Activated T-helper 1 cell treated with anti-CD3 and anti-CD28 coated beads, Interleukin-12 subunit alpha, Interleukin-12 subunit beta, Interleukin-2, Interleukin-4 antibody, amounts not matched to agents 30 ng/mL and 10 ng/mL and 1 ng/mL, durations not matched to agents 14 hours and 24 hours and 36 hours (primary cell): ENCODE measurements at regions of chr11 and their contacts with region 1.

Region 1: DNA sequence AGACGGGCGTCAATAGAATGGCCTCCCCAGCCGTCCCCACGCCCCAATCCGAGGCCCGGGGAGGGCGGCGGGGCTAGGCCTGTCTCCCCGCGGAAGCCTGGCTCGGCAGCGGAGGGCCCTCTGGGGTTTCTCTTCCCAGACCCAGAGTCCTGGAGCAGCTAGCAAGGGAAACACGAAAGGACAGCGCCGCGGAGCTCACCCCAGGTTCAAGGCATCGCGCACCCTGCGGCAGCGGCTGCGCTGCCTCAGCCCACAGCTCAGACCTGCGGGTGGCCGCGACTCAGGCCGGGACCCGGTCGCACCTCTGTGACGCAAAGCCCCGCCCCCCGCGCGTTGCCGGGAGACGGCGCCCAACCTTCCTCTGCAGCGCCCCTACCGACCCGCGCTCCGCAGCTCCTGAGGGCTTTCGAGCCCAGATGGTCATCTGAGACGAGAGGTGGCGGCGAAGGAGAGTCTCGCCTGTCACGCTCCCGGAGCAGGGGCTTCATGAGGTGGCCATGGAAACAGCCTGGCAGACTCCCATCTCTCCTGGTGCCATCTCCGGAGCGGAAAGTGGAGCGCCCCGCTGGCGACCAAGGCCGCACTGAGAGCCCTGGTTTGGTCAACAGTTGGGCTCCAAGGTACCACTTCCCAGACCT is at the start of gene RNF141:
- DNase-seq: peak; percentile 92
- H3K4me3 Mint-ChIP-seq: peak within 1 kb of the TSS; percentile 90
- H3K27ac Mint-ChIP-seq: peak within 1 kb of the TSS; percentile 73
- H3K4me1 Mint-ChIP-seq: peaks cover 29% of the 10 kb centered on the region
- H3K27me3 Mint-ChIP-seq: peaks cover 5% of the 10 kb centered on the region
- total RNA-seq, gene RNF141: 12.4 and 13.2 TPM in 2 replicates

Region 2: DNA sequence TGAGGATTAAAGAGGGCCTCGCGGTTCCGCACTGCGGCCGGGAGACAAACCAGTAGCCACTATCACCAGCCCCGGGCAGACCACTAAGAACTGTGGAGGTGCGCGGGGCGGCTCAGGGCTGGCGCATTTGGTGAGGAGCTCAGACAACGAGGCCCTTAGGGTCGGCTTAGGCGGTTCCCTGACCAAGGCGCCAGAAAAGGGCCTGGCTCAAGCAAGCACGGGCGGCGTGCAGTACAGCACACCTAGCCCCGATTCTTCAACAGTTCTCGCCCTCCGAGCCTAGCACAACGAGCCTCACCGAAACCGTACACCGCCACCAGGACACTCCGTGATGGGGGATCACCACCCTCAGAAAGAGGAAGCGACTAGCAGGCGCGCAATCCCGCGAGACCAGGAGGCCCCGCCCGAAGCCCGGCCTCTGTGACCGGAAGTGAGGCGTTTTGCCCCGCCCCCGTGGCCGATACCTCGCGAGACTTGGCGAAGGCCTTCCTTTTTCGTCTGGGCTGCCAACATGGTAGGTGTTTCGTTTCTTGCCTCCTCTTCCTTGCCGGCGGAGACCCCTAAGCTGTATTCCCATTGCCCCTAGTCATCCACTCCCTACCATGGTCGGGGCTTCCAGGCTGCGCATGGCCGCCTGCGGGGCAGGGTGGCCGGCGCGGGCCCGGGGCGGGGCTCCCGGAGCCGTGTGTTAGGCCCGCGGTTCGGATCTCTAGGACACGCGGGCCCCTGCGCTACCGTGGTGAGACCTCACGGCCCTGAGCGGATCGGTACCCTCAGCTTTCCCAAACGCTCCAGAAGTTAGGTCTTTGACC is 1858.5 kb before region 1 on chr11 and contains the starts of genes RPL27A and TRIM66:
- intact Hi-C with region 1: loop called (anchors 2 kb)
- DNase-seq: peak; percentile 99
- H3K4me3 Mint-ChIP-seq: peak within 1 kb of the TSS; percentile 97
- H3K27ac Mint-ChIP-seq: peak within 1 kb of the TSS; percentile 95
- H3K4me1 Mint-ChIP-seq: peaks cover 42% of the 10 kb centered on the region
- H3K27me3 Mint-ChIP-seq: no peaks in the 10 kb centered on the region
- total RNA-seq, gene RPL27A: 679 and 691 TPM in 2 replicates
- total RNA-seq, gene TRIM66: 11.7 and 14.2 TPM in 2 replicates

Region 3: DNA sequence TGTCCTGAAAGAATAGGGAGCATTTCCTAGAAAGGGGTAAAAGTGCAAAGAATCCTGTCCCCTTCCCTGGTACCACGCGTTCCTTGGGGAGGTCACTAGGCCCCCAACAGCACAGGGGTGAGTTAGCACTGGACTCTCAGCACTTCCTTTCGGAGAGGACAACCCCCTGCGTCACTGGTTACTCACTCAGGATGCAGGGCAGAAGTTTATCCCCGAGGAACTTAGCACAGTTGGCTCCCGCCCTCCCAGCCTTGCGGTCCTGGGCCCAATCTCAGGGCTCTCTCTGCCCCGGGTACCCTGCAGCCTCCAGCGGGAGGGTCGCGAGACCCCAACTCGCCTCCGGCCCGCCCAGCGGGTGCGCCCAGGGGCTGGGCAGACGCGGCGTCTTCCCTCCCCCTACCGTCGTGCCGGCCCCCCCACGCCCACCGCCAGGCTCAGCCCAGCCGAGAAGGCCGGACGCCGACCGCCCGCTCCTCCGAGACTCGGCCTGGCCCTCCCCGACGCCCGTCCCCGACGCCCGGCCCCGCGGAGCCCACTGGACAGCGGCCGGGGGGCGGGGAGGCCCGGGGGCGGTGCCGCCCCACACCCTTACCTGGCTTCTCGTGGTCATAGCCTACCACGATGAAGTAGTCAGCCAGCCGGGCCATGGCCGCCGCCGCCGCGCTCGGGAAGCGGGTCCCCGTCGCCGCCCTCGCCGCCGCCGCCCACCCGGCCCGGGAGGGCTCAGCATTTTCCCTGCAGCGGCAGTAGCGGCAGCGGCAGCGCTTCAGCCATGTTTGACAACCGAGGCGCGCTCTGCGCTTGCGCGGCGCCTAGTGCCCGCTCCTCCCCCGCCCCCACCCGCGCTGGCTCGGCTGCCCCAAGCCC is 247.4 kb before region 1 on chr11 and contains the start of gene SBF2:
- intact Hi-C with region 1: loop called (anchors 5 kb)
- DNase-seq: peak; percentile 69
- H3K4me3 Mint-ChIP-seq: peak within 1 kb of the TSS; percentile 80
- H3K27ac Mint-ChIP-seq: peak within 1 kb of the TSS; percentile 64
- H3K4me1 Mint-ChIP-seq: peaks cover 31% of the 10 kb centered on the region
- H3K27me3 Mint-ChIP-seq: peaks cover 61% of the 10 kb centered on the region
- total RNA-seq, gene SBF2: 5.3 and 5.4 TPM in 2 replicates

Region 4: GRCh38 chr11:10526974-10527918 is 13.8 kb before region 1 on chr11:
- intact Hi-C with region 1: loop called (anchors 1 kb)
- DNase-seq: no peak
- H3K4me3 Mint-ChIP-seq: peak overlapping the region; percentile 28
- H3K27ac Mint-ChIP-seq: peak overlapping the region; percentile 20
- H3K4me1 Mint-ChIP-seq: peaks cover 20% of the 10 kb centered on the region
- H3K27me3 Mint-ChIP-seq: no peaks in the 10 kb centered on the region

Region 5: GRCh38 chr11:10735481-10736475 is 194.7 kb after region 1 on chr11:
- intact Hi-C with region 1: loop called (anchors 1 kb)
- DNase-seq: peak; percentile 78
- H3K4me3 Mint-ChIP-seq: peak overlapping the region; percentile 37
- H3K27ac Mint-ChIP-seq: no peak overlapping the region
- H3K4me1 Mint-ChIP-seq: peaks cover 10% of the 10 kb centered on the region
- H3K27me3 Mint-ChIP-seq: peaks cover 10% of the 10 kb centered on the region

Region 6: DNA sequence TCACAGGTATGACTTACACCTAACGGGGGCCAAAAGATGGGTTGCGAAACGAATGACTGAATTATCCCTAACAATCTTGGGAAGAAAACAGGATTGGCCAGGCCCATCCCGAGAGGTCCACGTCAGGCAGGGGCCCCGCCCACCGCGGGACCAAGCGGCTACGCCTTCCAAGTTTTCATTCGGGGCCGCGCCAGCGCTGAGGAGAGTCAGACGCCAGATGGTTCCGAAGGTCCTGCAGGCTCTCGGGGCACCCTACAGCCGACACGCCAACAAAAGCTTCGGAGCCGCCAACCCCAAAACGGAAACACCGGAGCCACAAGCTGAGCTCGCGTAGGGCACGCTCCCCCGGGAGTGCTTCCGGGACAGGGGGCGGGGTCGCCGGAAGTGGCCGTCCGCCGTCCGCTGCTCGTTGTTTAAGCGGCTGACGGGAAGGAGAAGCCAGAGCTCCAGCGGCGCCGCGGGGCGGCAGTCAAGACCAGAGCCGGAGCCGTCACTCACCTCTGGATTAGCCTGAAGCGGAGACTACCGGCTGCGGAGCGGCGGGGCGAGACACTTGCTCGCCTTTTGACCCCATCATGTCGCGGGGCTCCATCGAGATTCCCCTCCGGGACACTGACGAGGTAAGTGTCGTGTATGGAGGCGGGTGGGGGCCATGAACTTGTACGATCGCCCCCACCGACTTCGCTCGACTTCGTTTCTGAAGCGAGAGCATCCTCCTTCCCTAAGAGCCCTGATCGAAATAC is 210.0 kb after region 1 on chr11 and contains the start of gene CTR9:
- intact Hi-C with region 1: loop called (anchors 2 kb)
- DNase-seq: peak; percentile 92
- H3K4me3 Mint-ChIP-seq: peak within 1 kb of the TSS; percentile 96
- H3K27ac Mint-ChIP-seq: peak within 1 kb of the TSS; percentile 87
- H3K4me1 Mint-ChIP-seq: peaks cover 38% of the 10 kb centered on the region
- H3K27me3 Mint-ChIP-seq: no peaks in the 10 kb centered on the region
- total RNA-seq, gene CTR9: 46.2 and 51.1 TPM in 2 replicates

Region 7: DNA sequence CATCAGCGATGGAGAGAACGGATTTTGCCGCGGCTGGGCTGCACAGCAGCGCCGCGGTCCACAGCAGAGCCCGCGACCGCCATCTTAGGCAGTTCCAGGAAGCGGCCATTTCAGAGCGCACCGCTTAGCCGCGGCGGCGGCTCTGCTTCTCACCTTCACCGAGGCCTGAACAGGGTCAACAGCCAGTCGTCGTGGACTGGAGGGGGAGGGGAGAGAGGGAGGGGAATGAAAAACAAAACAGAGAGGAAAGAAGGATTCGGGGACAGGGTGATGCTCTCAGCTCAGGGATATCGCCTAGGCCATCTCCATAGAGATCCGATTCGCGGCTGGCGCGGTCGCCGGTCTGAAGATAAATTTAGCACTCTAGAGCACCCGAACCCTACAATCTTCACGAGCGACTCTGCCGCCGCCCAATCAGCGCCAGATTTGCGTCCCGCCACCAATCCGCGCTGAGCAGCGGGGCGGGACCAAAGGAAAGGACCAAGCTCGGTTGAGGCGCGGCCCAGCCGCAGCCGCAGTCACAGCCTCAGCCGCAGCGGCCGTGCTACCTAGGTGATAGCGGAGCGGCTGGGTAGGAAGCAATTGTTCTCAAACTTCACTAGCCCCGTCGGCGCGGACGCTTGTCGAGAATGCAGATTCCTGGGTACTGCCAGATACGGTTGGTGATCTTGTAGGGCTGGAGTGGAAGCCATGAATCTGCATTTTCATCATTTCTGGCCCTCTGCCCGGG is 316.8 kb after region 1 on chr11 and contains the start of gene ZBED5:
- intact Hi-C with region 1: loop called (anchors 2 kb)
- DNase-seq: peak; percentile 94
- H3K4me3 Mint-ChIP-seq: peak within 1 kb of the TSS; percentile 100
- H3K27ac Mint-ChIP-seq: peak within 1 kb of the TSS; percentile 100
- H3K4me1 Mint-ChIP-seq: peaks cover 46% of the 10 kb centered on the region
- H3K27me3 Mint-ChIP-seq: no peaks in the 10 kb centered on the region
- total RNA-seq, gene ZBED5: 38.9 and 42.2 TPM in 2 replicates